ENCODE measurements at regions of chr12 and their contacts with region 1.

Region 1: GRCh38 chr12:12786716-12787601 is 1.5 kb downstream of the APOLD1 start:
- DNase-seq: peak; percentile 70
- H3K4me3 Mint-ChIP-seq: peak overlapping the region; percentile 89
- H3K27ac Mint-ChIP-seq: peak overlapping the region; percentile 88
- H3K4me1 Mint-ChIP-seq: peaks cover 42% of the 10 kb centered on the region
- H3K27me3 Mint-ChIP-seq: no peaks in the 10 kb centered on the region

Region 2: GRCh38 chr12:12724661-12725545 is 62.1 kb before region 1 on chr12:
- intact Hi-C with region 1: loop called (anchors 2 kb)
- DNase-seq: peak; percentile 88
- H3K4me3 Mint-ChIP-seq: peak overlapping the region; percentile 90
- H3K27ac Mint-ChIP-seq: peak overlapping the region; percentile 96
- H3K4me1 Mint-ChIP-seq: peaks cover 56% of the 10 kb centered on the region
- H3K27me3 Mint-ChIP-seq: peaks cover 3% of the 10 kb centered on the region

Region 3: DNA sequence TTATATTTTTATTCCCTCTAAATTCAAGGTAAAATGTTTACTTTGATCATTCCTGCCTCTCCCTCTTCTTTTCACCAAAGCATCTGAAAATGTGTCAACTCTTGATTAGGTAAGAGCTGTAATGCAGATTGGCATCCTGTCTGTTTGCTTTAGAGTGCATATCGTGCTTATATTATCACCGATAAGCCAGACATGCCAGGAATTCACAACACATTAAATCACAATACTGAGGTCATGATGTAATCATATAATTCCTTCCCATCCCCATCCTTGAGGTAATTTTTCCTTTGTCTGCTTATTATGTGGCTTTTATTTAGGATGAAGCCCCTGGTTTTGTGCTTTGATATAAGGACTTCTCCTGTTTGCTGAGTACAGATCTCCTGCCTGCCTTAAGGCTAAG is 36.3 kb after region 1 on chr12:
- intact Hi-C with region 1: loop called (anchors 5 kb)
- DNase-seq: no peak
- H3K4me3 Mint-ChIP-seq: no peak overlapping the region
- H3K27ac Mint-ChIP-seq: peak overlapping the region; percentile 14
- H3K4me1 Mint-ChIP-seq: peaks cover 27% of the 10 kb centered on the region
- H3K27me3 Mint-ChIP-seq: no peaks in the 10 kb centered on the region

Region 4: GRCh38 chr12:12899530-12900380 is 112.8 kb after region 1 on chr12:
- intact Hi-C with region 1: loop called (anchors 2 kb)
- DNase-seq: peak; percentile 26
- H3K4me3 Mint-ChIP-seq: no peak overlapping the region
- H3K27ac Mint-ChIP-seq: peak overlapping the region; percentile 37
- H3K4me1 Mint-ChIP-seq: peaks cover 13% of the 10 kb centered on the region
- H3K27me3 Mint-ChIP-seq: peaks cover 12% of the 10 kb centered on the region

Region 5: DNA sequence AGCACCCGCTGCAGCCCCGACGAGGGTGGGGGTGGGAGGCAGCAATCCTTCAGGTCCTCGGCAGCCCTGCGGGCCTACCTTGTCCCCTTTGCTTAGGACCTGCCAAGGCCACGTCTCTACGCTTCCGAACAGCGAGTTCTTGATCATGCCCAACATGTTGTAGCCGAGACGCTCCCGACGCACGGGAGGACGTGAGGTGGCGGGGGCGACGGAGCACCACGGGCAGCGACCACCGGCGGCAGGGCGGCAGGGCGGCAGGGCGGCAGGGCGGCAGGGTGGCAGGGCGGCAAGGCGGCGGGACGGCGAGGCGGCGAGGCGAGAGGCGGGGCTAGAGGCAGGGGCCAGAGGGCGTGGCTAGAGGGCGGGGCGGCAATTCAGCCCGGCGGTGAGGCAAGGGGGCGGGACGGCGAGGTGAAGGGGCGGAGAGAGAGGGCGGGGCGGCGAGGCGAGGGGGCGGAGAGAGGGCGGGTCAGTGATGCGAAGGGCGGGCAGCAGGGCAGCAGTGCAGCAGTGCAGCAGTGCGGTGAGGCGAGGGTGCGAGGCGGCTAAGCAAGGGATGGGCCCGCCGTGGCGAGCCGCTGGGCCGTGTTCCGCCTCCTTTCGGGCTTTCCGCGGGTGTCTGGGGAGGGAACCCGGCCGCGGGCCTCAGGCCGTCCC is 213.1 kb after region 1 on chr12 and contains the start of gene HEBP1:
- intact Hi-C with region 1: loop called (anchors 1 kb)
- DNase-seq: peak; percentile 91
- H3K4me3 Mint-ChIP-seq: peak within 1 kb of the TSS; percentile 87
- H3K27ac Mint-ChIP-seq: peak within 1 kb of the TSS; percentile 86
- H3K4me1 Mint-ChIP-seq: peaks cover 37% of the 10 kb centered on the region
- H3K27me3 Mint-ChIP-seq: peaks cover 34% of the 10 kb centered on the region
- total RNA-seq, gene HEBP1: 9.5 and 11.3 TPM in 2 replicates

Region 6: GRCh38 chr12:13196130-13196921 is 409.4 kb after region 1 on chr12 and contains the start of gene EMP1:
- intact Hi-C with region 1: loop called (anchors 2 kb)
- DNase-seq: peak; percentile 65
- H3K4me3 Mint-ChIP-seq: peak within 1 kb of the TSS; percentile 79
- H3K27ac Mint-ChIP-seq: peak within 1 kb of the TSS; percentile 81
- H3K4me1 Mint-ChIP-seq: peaks cover 30% of the 10 kb centered on the region
- H3K27me3 Mint-ChIP-seq: peaks cover 19% of the 10 kb centered on the region
- total RNA-seq, gene EMP1: 29.6 and 33.6 TPM in 2 replicates

Measured in activated T-helper 1 cell treated with anti-CD3 and anti-CD28 coated beads, Interleukin-12 subunit alpha, Interleukin-12 subunit beta, Interleukin-2, Interleukin-4 antibody, amounts not matched to agents 30 ng/mL and 10 ng/mL and 1 ng/mL, durations not matched to agents 14 hours and 24 hours and 36 hours (primary cell).